ENCODE measurements at regions of chr11 and their contacts with region 1.

Region 1: DNA sequence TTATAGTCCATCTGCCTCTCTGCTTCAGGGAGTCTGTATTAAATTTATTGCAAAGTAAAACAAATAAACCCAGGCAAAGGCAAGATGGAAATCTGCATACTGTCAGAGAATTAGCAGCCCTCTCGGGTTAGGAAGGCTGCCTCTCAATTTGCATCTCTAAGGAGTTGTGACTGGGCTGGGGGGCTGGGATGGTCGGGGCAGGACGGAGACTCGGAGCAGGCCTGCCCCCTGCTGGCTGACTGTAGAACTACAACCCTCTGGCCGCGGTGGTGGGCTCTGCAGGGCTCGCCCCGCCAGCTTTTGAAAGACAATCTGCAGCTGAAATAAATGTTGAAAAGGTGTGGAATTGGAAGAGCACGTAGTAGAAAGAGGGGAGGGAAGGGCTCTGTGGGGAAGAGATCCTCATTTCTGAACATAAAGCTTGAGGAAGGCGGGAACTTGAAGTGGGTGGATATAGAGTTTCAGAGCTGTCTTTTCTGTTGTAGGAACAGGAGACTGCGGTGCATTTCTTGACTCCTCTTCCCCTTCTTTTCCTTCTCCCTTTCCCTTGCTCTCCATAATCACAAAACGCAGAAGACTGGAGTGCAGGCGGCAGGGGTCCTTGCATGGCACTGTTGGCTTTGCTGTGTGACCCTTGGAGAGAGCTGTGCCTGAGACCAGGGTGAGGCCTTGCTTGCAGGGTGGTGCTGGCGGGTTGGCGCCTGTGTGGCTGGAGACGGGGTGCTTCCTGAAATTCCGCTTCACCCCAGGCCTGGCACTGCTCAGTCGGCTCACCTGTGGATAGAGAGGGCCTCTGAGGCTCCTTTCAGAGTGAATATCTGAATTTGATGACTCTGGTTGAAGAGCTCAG is 22.6 kb upstream of the PKNOX2 start:
- DNase-seq: peak; percentile 62
- H3K4me3 Mint-ChIP-seq: no peak overlapping the region
- H3K27ac Mint-ChIP-seq: no peak overlapping the region
- H3K4me1 Mint-ChIP-seq: peaks cover 4% of the 10 kb centered on the region
- H3K27me3 Mint-ChIP-seq: peaks cover 21% of the 10 kb centered on the region

Region 2: GRCh38 chr11:124961972-124962609 is 179.8 kb before region 1 on chr11:
- CTCF ChIA-PET with region 1: interaction called, 66 read pairs
- POLR2A ChIA-PET with region 1: no interaction called
- intact Hi-C with region 1: loop called (anchors 1 kb)
- DNase-seq: no peak
- H3K4me3 Mint-ChIP-seq: no peak overlapping the region
- H3K27ac Mint-ChIP-seq: no peak overlapping the region
- H3K4me1 Mint-ChIP-seq: no peaks in the 10 kb centered on the region
- H3K27me3 Mint-ChIP-seq: no peaks in the 10 kb centered on the region

Region 3: DNA sequence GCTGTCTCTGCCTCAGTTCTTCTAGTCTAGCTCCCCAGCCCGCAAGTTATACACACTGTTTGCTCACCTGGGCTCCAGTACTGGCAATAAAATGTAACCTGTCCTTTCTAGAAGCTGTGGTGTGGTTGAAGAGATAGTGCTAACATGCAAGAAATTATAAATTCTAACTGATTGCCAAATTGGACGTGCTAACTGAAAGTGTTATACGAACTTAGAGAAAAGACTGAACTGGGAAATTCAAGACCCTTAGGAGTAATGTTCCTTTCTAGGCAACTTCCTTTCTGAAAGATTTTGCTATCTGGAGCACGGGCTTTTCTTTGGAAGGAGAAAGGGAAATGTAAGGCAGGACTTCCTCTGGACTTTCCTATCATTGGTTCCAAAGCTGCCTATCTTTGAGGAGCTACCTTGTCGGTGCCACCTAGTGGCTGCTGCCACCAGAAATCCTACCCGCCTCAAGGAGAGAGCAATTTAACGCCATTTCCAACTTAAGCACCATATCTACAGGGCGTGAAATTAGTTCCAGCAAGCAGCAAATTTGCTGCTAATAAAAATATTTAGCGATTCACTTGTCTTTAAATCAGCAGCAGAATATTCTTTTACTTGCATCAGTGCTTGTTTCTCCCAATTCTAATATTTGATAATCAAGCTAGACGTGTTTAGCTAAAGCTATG is 17.8 kb before region 1 on chr11:
- CTCF ChIA-PET with region 1: interaction called, 32 read pairs
- POLR2A ChIA-PET with region 1: no interaction called
- intact Hi-C with region 1: no loop called
- DNase-seq: peak; percentile 61
- H3K4me3 Mint-ChIP-seq: no peak overlapping the region
- H3K27ac Mint-ChIP-seq: no peak overlapping the region
- H3K4me1 Mint-ChIP-seq: peaks cover 6% of the 10 kb centered on the region
- H3K27me3 Mint-ChIP-seq: peaks cover 15% of the 10 kb centered on the region